Mammary epithelial cell (primary cell): ENCODE measurements at regions of chr3 and their contacts with region 1.

Region 1: DNA sequence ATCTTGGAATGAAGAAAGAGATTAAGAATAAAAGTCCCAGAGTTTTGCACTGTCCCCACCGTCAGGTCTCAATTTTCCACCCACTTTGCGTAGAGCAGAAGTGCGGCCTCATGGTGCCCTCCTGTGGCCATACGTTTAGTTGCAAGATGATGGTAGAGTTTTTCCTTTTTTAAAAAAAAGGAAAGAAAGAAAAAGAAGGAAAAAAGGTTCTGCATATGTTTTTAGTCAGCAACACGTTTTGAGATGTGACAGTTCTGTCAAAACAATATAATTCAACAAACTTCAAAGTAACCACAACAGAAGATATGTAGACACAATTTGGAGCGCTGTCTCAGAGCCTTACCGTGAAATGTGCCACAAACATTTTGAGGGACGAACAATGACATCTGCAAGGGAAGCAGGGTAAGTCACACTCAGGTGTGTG is 24.6 kb downstream of the EBLN2 start:
- DNase-seq: no peak
- H3K4me3 ChIP-seq: no peak overlapping the region
- H3K27ac ChIP-seq: no peak overlapping the region
- H3K4me1 ChIP-seq: no peaks in the 10 kb centered on the region
- H3K27me3 ChIP-seq: no peaks in the 10 kb centered on the region
- CTCF ChIP-seq: peak; percentile 66 to 74

Region 2: DNA sequence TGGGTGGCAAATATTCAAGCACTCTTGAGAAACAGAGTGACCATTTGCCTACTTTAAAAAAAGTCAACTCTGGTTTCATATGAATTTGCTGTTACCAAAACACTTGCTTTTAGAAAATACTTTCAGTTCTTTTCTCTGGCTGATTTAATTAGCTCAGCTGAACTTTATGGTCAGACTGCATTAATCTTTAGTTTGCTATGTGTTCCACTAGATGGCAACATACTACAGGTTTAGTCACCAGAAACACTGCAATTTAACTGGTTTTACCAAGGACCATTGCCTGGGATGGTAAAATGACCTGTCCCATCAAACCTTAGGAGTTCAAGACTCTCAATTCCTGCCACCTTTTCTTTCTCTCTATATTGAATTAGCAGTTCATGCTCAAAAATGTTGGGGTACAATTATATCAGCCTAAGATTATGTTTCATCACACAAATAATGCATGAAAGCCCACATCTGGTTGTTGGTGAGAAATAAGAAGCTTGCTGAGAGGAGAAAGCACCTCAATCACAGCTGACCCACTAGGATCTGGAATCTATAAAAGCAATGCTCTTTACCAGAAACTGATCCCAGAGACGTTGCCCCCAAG is 1375.1 kb before region 1 on chr3:
- CTCF ChIA-PET with region 1: no interaction called
- dilution Hi-C with region 1: no loop called
- in situ Hi-C with region 1: loop called in 1 of 2 experiments (anchors 25 kb)
- intact Hi-C with region 1: loop called (anchors 2 kb)
- DNase-seq: peak; percentile 33
- H3K4me3 ChIP-seq: no peak overlapping the region
- H3K27ac ChIP-seq: no peak overlapping the region
- H3K4me1 ChIP-seq: peaks cover 6% of the 10 kb centered on the region
- H3K27me3 ChIP-seq: no peaks in the 10 kb centered on the region
- CTCF ChIP-seq: peak; percentile 63 to 64

Region 3: GRCh38 chr3:71875461-71875947 is 1210.6 kb before region 1 on chr3:
- CTCF ChIA-PET with region 1: no interaction called
- dilution Hi-C with region 1: no loop called
- in situ Hi-C with region 1: no loop called
- intact Hi-C with region 1: loop called (anchors 1 kb)
- DNase-seq: peak; percentile 51
- H3K4me3 ChIP-seq: no peak overlapping the region
- H3K27ac ChIP-seq: no peak overlapping the region
- H3K4me1 ChIP-seq: no peaks in the 10 kb centered on the region
- H3K27me3 ChIP-seq: no peaks in the 10 kb centered on the region
- CTCF ChIP-seq: peak; percentile 92 to 94

Region 4: GRCh38 chr3:71905426-71905825 is 1180.7 kb before region 1 on chr3:
- CTCF ChIA-PET with region 1: no interaction called
- dilution Hi-C with region 1: no loop called
- in situ Hi-C with region 1: loop called in 1 of 2 experiments (anchors 25 kb)
- intact Hi-C with region 1: no loop called
- DNase-seq: no peak
- H3K4me3 ChIP-seq: no peak overlapping the region
- H3K27ac ChIP-seq: no peak overlapping the region
- H3K4me1 ChIP-seq: no peaks in the 10 kb centered on the region
- H3K27me3 ChIP-seq: peaks cover 11% of the 10 kb centered on the region
- CTCF ChIP-seq: no peak

Region 5: GRCh38 chr3:71926262-71926600 is 1159.9 kb before region 1 on chr3:
- CTCF ChIA-PET with region 1: no interaction called
- dilution Hi-C with region 1: no loop called
- in situ Hi-C with region 1: loop called in 1 of 2 experiments (anchors 25 kb)
- intact Hi-C with region 1: loop called (anchors 10 kb)
- DNase-seq: peak; percentile 69
- H3K4me3 ChIP-seq: no peak overlapping the region
- H3K27ac ChIP-seq: no peak overlapping the region
- H3K4me1 ChIP-seq: peaks cover 7% of the 10 kb centered on the region
- H3K27me3 ChIP-seq: no peaks in the 10 kb centered on the region
- CTCF ChIP-seq: peak; percentile 83 to 86

Region 6: DNA sequence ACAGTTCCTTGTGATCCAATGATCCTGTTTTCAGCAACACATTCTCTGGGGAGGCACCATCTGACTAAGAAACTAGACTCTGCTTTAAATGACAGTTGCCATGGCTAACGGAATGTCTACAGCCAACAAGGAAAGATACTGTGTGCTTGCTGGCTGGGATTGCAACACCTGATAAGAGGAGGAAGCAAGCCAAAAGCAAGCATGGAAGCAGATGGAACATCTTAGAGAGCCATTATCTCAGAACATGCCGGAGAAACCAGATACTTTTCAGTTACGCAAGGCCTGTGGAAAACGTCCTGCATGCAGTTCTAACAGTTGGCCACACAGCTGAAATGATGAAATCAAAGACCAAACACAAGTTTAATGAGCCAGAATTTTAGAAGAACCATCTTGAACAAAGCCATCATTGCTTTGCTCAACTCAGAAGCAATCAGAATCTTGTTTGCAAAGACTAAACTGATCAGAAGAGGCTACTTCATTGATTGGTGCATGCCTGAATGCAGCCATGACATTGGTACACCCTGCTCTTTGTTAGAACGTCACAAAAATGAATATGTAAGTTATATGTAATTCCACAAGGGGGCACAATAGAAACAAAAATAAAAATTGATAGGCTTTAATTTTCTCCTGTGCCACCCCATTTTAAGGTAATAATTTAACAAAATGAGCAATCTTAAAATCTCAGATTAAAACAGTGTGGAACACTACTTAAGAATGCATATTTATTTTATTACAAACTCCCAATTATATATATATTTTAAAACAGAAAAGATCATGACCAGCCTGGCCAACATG is 147.4 kb before region 1 on chr3:
- CTCF ChIA-PET with region 1: interaction called, 4 read pairs
- dilution Hi-C with region 1: no loop called
- in situ Hi-C with region 1: loop called in 1 of 2 experiments (anchors 10 kb)
- intact Hi-C with region 1: loop called (anchors 1 kb)
- DNase-seq: peak; percentile 63
- H3K4me3 ChIP-seq: no peak overlapping the region
- H3K27ac ChIP-seq: no peak overlapping the region
- H3K4me1 ChIP-seq: peaks cover 9% of the 10 kb centered on the region
- H3K27me3 ChIP-seq: no peaks in the 10 kb centered on the region
- CTCF ChIP-seq: peak; percentile 39 to 61

Region 7: GRCh38 chr3:73143821-73144237 is 57.7 kb after region 1 on chr3:
- CTCF ChIA-PET with region 1: no interaction called
- dilution Hi-C with region 1: no loop called
- in situ Hi-C with region 1: no loop called
- intact Hi-C with region 1: no loop called
- DNase-seq: no peak
- H3K4me3 ChIP-seq: no peak overlapping the region
- H3K27ac ChIP-seq: no peak overlapping the region
- H3K4me1 ChIP-seq: no peaks in the 10 kb centered on the region
- H3K27me3 ChIP-seq: no peaks in the 10 kb centered on the region
- CTCF ChIP-seq: no peak